Heart right ventricle (tissue), 16 donors: ENCODE measurements at regions of chr12 and their contacts with region 1.

Region 1: GRCh38 chr12:32828552-32828951 is 68.0 kb downstream of the PKP2 start:
- DNase-seq: no peak
- ATAC-seq: peak in 7 of 8 donors; percentile 9 to 56 (median 43)
- H3K4me3 ChIP-seq: no peak overlapping the region
- H3K27ac ChIP-seq: peak overlapping the region; percentile 8 to 91 (median 72)
- H3K4me1 ChIP-seq: peaks cover 0 to 61% (median 11%) of the 10 kb centered on the region in 9 donors
- H3K27me3 ChIP-seq: no peaks in the 10 kb centered on the region
- CTCF ChIP-seq: no peak

Region 2: DNA sequence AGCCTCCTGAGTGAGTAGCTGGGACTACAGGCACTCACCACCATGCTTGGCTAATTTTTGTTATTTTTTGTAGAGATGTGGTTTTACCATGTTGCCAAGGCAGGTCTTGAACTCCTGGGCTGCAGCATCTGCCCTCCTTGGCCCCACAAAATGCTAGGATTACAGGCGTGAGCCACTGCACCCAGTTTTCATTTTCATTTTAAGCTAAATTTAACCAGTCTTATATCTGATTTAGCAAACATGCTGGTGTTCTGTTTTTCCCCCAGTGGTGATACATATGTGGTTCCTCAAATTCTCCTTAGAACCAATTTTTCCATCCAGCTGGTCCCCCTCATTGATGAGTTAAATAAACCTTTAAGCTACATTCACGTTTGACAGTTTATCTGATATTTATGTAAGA is 765.7 kb before region 1 on chr12:
- intact Hi-C with region 1: no loop called
- DNase-seq: no peak
- ATAC-seq: no peak
- H3K4me3 ChIP-seq: no peak overlapping the region
- H3K27ac ChIP-seq: no peak overlapping the region
- H3K4me1 ChIP-seq: peaks cover 0 to 3% (median 0%) of the 10 kb centered on the region in 9 donors
- H3K27me3 ChIP-seq: no peaks in the 10 kb centered on the region
- CTCF ChIP-seq: no peak

Region 3: DNA sequence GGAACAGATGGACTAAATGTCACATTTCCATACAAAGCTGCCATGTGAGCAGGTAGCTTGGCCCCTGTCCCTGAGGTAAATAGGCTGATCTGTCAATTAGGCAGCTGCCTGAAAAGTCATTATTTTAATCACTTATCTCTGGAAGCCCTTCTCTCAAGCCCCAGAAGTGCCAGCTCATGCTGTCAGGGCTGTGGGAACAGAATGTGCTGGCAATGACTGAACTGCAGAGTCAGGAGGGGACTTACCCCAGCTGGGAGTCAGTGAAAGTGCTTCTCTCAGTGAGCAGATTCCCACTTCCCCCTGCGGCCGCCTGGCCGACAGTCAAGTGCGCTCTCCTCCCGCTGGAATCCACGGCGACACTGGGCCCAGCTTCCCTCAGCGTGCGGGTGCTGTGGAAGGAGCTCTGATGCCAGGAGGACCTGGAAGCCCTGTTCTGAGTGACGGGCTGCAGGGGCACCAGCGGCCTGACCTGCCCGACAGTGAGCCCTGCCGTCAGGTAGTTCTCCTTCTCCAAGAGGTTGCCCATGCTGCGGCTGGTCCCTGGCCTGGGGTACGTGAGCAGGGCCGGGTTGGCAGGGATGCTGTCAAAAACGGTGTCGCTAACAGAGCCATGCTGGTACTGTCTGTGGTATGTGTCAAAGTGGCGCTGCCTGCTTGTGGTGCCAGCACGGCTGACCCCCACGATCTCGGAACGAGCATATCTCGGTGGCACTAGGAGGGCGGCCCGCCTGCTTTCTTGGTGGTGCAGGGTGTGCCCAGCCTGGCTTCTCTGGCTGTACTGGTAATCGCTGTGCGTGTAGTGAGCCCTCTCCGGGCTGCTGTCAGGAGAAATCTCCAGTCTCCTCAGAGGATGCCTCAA is 49.3 kb after region 1 on chr12:
- intact Hi-C with region 1: loop called in 3 of 10 experiments (anchors 2 to 5 kb)
- DNase-seq: peak; percentile 80 to 85
- ATAC-seq: peak; percentile 85 to 93 (median 92)
- H3K4me3 ChIP-seq: peak overlapping the region in 8 of 10 donors; percentile 6 to 33 (median 29)
- H3K27ac ChIP-seq: peak overlapping the region; percentile 68 to 91 (median 84)
- H3K4me1 ChIP-seq: peaks cover 0 to 85% (median 14%) of the 10 kb centered on the region in 9 donors
- H3K27me3 ChIP-seq: no peaks in the 10 kb centered on the region
- CTCF ChIP-seq: no peak